ENCODE measurements at regions of chr6 and their contacts with region 1.

Region 1: GRCh38 chr6:125906158-125906998 is 50.2 kb upstream of the HINT3 start:
- DNase-seq: peak; percentile 72
- ATAC-seq: no peak
- H3K4me3 Mint-ChIP-seq: no peak overlapping the region
- H3K27ac Mint-ChIP-seq: no peak overlapping the region
- H3K4me1 Mint-ChIP-seq: peaks cover 41% of the 10 kb centered on the region
- H3K27me3 Mint-ChIP-seq: no peaks in the 10 kb centered on the region

Region 2: GRCh38 chr6:125670568-125670967 is 235.8 kb before region 1 on chr6:
- CTCF ChIA-PET with region 1: no interaction called
- POLR2A ChIA-PET with region 1: no interaction called
- intact Hi-C with region 1: no loop called
- DNase-seq: no peak
- ATAC-seq: no peak
- H3K4me3 Mint-ChIP-seq: no peak overlapping the region
- H3K27ac Mint-ChIP-seq: no peak overlapping the region
- H3K4me1 Mint-ChIP-seq: no peaks in the 10 kb centered on the region
- H3K27me3 Mint-ChIP-seq: peaks cover 6% of the 10 kb centered on the region

Region 3: GRCh38 chr6:125804264-125804663 is 102.1 kb before region 1 on chr6:
- CTCF ChIA-PET with region 1: interaction called, 3 read pairs
- POLR2A ChIA-PET with region 1: no interaction called
- intact Hi-C with region 1: loop called in 1 of 2 experiments (anchors 1 kb)
- DNase-seq: peak; percentile 54
- ATAC-seq: peak; percentile 79
- H3K4me3 Mint-ChIP-seq: no peak overlapping the region
- H3K27ac Mint-ChIP-seq: no peak overlapping the region
- H3K4me1 Mint-ChIP-seq: peaks cover 67% of the 10 kb centered on the region
- H3K27me3 Mint-ChIP-seq: no peaks in the 10 kb centered on the region

Region 4: GRCh38 chr6:125888989-125889656 is 17.3 kb before region 1 on chr6:
- CTCF ChIA-PET with region 1: interaction called, 12 read pairs
- POLR2A ChIA-PET with region 1: no interaction called
- intact Hi-C with region 1: no loop called
- DNase-seq: peak; percentile 38
- ATAC-seq: no peak
- H3K4me3 Mint-ChIP-seq: no peak overlapping the region
- H3K27ac Mint-ChIP-seq: no peak overlapping the region
- H3K4me1 Mint-ChIP-seq: no peaks in the 10 kb centered on the region
- H3K27me3 Mint-ChIP-seq: no peaks in the 10 kb centered on the region

Region 5: DNA sequence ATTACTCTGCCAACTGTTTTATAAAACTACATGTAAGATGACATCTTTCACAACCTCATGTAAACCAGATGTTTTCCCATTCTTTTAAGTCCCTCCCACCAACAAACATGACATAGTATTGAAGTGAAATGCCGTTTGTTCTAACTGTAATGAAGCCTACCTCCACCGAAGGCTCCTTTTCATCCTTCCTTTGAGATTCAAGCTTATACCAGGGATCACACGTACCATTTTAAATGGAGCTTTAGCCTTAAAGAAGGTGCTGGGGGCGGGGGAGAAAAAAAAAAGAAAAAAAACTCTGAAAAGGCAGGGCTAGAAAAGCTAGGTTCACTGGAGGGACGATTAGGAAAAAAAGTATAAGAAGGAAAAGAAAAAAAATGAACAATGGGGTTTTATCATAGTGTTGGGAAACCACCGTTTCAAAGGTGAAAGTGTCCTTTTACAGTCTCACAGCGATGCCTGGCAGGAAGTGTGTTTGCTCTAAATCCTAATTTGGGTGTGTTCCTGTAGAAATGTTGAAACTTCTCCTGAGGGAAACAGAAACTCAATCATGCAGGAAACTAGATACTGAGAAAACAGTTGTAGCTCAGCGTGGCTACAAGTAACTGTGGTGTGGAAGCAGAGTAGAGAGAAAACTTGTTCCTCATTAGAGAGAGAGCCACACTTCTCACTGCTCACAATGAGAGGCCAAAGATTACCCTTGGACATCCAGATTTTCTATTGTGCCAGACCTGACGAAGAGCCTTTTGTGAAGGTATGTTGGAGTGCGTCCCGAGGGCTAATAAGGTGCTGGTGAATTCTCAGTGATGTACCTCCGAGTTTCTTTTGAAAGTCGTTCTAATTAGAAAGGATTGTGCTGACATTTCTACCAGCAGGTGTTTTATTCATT is 12.5 kb after region 1 on chr6:
- CTCF ChIA-PET with region 1: interaction called, 33 read pairs
- POLR2A ChIA-PET with region 1: interaction called, 5 read pairs
- intact Hi-C with region 1: loop called (anchors 1 kb)
- DNase-seq: peak; percentile 68
- ATAC-seq: peak; percentile 96
- H3K4me3 Mint-ChIP-seq: peak overlapping the region; percentile 84
- H3K27ac Mint-ChIP-seq: peak overlapping the region; percentile 98
- H3K4me1 Mint-ChIP-seq: peaks cover 37% of the 10 kb centered on the region
- H3K27me3 Mint-ChIP-seq: no peaks in the 10 kb centered on the region